ENCODE measurements at regions of chr2 and their contacts with region 1.

Region 1: GRCh38 chr2:207503234-207503633 is 26.5 kb upstream of the CREB1 start:
- DNase-seq: peak; percentile 44
- ATAC-seq: peak; percentile 41
- H3K4me3 Mint-ChIP-seq: no peak overlapping the region
- H3K27ac Mint-ChIP-seq: no peak overlapping the region
- H3K4me1 Mint-ChIP-seq: peaks cover 61% of the 10 kb centered on the region
- H3K27me3 Mint-ChIP-seq: no peaks in the 10 kb centered on the region
- CTCF ChIP-seq: no peak

Region 2: DNA sequence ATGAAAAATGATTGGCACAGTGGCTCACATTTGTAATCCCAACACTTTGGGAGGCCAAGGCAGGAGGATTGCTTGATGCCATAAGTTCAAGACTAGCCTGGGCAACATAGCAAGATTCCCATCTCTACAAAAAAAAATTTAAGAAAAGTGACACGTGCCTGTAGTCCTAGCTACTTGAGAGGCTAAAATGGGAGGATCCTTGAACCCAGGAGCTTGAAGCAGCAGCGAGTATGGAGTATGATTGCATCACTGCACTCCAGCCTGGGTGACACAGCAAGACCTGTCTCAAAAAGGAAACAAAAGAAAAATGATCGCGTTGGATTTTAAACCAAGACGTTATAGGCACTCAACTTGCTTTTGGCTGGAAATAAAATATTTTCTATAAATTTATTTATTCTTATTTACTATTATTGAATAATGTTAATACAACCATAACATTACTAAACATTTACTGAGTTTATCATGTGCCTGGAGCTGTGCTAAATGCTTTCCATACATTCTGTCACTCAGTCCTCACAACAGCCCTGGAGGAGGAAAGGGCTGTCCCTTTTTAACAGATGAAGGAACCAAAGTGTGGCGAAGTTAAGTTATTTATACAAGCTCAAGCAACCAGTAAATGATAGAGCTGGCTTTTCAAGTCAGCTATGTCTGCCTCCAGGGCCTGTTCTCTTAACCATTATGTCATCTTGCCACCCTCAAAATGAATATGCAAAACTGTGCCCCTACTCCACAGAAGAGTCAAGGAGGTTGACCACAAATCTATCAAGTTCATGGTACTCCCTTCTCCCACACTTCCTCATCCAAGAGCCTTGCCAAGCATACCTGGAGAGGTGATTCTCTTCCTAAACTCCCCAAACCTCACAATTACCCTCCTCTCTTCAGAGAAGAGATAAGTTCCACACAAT is 11.0 kb before region 1 on chr2:
- CTCF ChIA-PET with region 1: interaction called, 12 read pairs
- POLR2A ChIA-PET with region 1: interaction called, 4 read pairs
- intact Hi-C with region 1: no loop called
- DNase-seq: no peak
- ATAC-seq: no peak
- H3K4me3 Mint-ChIP-seq: no peak overlapping the region
- H3K27ac Mint-ChIP-seq: no peak overlapping the region
- H3K4me1 Mint-ChIP-seq: peaks cover 4% of the 10 kb centered on the region
- H3K27me3 Mint-ChIP-seq: no peaks in the 10 kb centered on the region
- CTCF ChIP-seq: no peak